GM12878 (cell line): ENCODE measurements at regions of chr6 and their contacts with region 1.

Region 1: GRCh38 chr6:88165844-88166492 is at the start of gene CNR1:
- DNase-seq: no peak
- ATAC-seq: peak; percentile 76
- H3K4me3 ChIP-seq: peak within 1 kb of the TSS; percentile 94
- H3K27ac ChIP-seq: no peak within 1 kb of the TSS; the same call in 1 of the 2 replicates
- H3K4me1 ChIP-seq: no peaks in the 10 kb centered on the region
- H3K27me3 ChIP-seq: 0 out of 4 replicates have a peak, but pooled peaks cover 0 to 6% of the 10 kb centered on the region in 2 experiments
- CTCF ChIP-seq: peak; percentile 24 to 47 (median 33); a peak in 4 of 6 replicates
- EP300 ChIP-seq: no peak
- POLR2A ChIP-seq: peak; percentile 77
- RAD21 ChIP-seq: no peak; the same call in 1 of the 2 replicates
- polyA plus RNA-seq, gene CNR1: 2.2 to 3.1 TPM

Region 2: GRCh38 chr6:87935196-87935595 is 230.8 kb before region 1 on chr6:
- CTCF ChIA-PET with region 1: interaction called, 50 read pairs
- POLR2A ChIA-PET with region 1: no interaction called
- RAD21 ChIA-PET with region 1: interaction called, 34 read pairs
- SMC1A ChIA-PET with region 1: interaction called, 34 read pairs
- in situ Hi-C with region 1: loop called (anchors 5 kb)
- intact Hi-C with region 1: no loop called
- DNase-seq: no peak
- ATAC-seq: no peak
- H3K4me3 ChIP-seq: no peak overlapping the region
- H3K27ac ChIP-seq: no peak overlapping the region
- H3K4me1 ChIP-seq: peaks cover 2% of the 10 kb centered on the region
- H3K27me3 ChIP-seq: no peaks in the 10 kb centered on the region
- CTCF ChIP-seq: no peak
- EP300 ChIP-seq: no peak
- POLR2A ChIP-seq: no peak
- RAD21 ChIP-seq: no peak

Region 3: GRCh38 chr6:88141561-88142296 is 24.2 kb before region 1 on chr6:
- CTCF ChIA-PET with region 1: interaction called, 7 read pairs
- POLR2A ChIA-PET with region 1: interaction called, 12 read pairs
- RAD21 ChIA-PET with region 1: interaction called, 23 read pairs
- SMC1A ChIA-PET with region 1: interaction called, 12 read pairs
- in situ Hi-C with region 1: no loop called
- intact Hi-C with region 1: loop called (anchors 2 kb)
- DNase-seq: peak; percentile 84
- ATAC-seq: peak; percentile 94
- H3K4me3 ChIP-seq: 0 out of 2 replicates have a peak overlapping the region, but pooled peaks have one; percentile 29
- H3K27ac ChIP-seq: peak overlapping the region; percentile 61
- H3K4me1 ChIP-seq: peaks cover 18% of the 10 kb centered on the region
- H3K27me3 ChIP-seq: no peaks in the 10 kb centered on the region
- CTCF ChIP-seq: no peak
- EP300 ChIP-seq: peak in 1 of 2 experiments; percentile 40; a peak in 1 of 4 replicates
- POLR2A ChIP-seq: no peak
- RAD21 ChIP-seq: peak; percentile 37

Region 4: GRCh38 chr6:88238065-88238464 is 72.1 kb after region 1 on chr6:
- CTCF ChIA-PET with region 1: interaction called, 8 read pairs
- POLR2A ChIA-PET with region 1: no interaction called
- RAD21 ChIA-PET with region 1: interaction called, 8 read pairs
- SMC1A ChIA-PET with region 1: interaction called, 13 read pairs
- in situ Hi-C with region 1: no loop called
- intact Hi-C with region 1: loop called (anchors 2 kb)
- DNase-seq: peak; percentile 33
- ATAC-seq: peak; percentile 92
- H3K4me3 ChIP-seq: no peak overlapping the region
- H3K27ac ChIP-seq: no peak overlapping the region
- H3K4me1 ChIP-seq: peaks cover 3% of the 10 kb centered on the region; the same call in 1 of the 2 replicates
- H3K27me3 ChIP-seq: no peaks in the 10 kb centered on the region
- CTCF ChIP-seq: peak; percentile 64 to 77 (median 66); a peak in 5 of 6 replicates
- EP300 ChIP-seq: no peak
- POLR2A ChIP-seq: no peak
- RAD21 ChIP-seq: peak; percentile 97

Region 5: GRCh38 chr6:88698661-88699060 is 532.7 kb after region 1 on chr6:
- CTCF ChIA-PET with region 1: no interaction called
- POLR2A ChIA-PET with region 1: no interaction called
- RAD21 ChIA-PET with region 1: no interaction called
- SMC1A ChIA-PET with region 1: no interaction called
- in situ Hi-C with region 1: no loop called
- intact Hi-C with region 1: no loop called
- DNase-seq: no peak
- ATAC-seq: no peak
- H3K4me3 ChIP-seq: no peak overlapping the region
- H3K27ac ChIP-seq: no peak overlapping the region
- H3K4me1 ChIP-seq: no peaks in the 10 kb centered on the region
- H3K27me3 ChIP-seq: no peaks in the 10 kb centered on the region
- CTCF ChIP-seq: no peak
- EP300 ChIP-seq: no peak
- POLR2A ChIP-seq: no peak
- RAD21 ChIP-seq: no peak

Region 6: GRCh38 chr6:88780714-88781389 is 614.9 kb after region 1 on chr6:
- CTCF ChIA-PET with region 1: interaction called, 10 read pairs
- POLR2A ChIA-PET with region 1: no interaction called
- RAD21 ChIA-PET with region 1: interaction called, 11 read pairs
- SMC1A ChIA-PET with region 1: interaction called, 7 read pairs
- in situ Hi-C with region 1: no loop called
- intact Hi-C with region 1: loop called (anchors 5 kb)
- DNase-seq: peak; percentile 63
- ATAC-seq: peak; percentile 90
- H3K4me3 ChIP-seq: no peak overlapping the region
- H3K27ac ChIP-seq: no peak overlapping the region
- H3K4me1 ChIP-seq: no peaks in the 10 kb centered on the region
- H3K27me3 ChIP-seq: no peaks in the 10 kb centered on the region
- CTCF ChIP-seq: peak; percentile 60 to 68 (median 67); a peak in 5 of 6 replicates
- EP300 ChIP-seq: no peak
- POLR2A ChIP-seq: no peak
- RAD21 ChIP-seq: peak; percentile 88